ENCODE measurements at regions of chr16 and their contacts with region 1.

Region 1: DNA sequence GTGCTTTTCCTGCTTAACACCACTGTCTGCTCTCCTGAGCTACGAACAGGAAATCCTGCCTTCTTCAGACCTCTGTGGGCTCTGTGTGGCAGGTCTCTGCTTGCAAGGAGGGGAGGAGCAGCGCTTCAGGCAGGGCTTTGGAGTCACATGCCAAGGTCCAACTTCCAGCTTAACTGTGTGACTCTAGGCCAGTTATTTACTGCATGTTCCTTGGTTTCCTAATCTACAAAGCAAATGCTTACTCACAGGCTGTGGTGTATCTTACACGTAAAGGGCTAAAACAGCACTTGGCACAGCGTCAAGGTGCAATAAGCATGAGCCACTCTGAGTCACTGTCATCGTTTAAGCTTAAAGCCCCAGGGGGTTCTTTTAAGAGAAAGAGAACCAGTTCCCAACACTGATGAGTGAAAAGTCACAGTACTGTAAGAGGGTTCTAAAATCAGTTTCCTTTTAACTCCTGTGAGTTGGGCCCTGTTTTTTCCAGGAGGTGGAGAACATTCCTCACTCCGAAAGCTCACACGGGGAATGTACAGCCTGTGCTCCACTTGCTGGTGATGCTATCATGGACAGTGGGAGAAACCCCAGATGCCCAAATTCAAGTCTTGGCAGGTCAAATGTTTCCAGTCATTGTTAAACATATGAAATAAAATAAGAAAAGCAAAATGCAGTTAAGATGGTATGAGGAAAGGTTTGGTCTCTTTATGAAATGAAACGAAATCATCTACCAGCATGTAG is 54.1 kb upstream of the BCAR1 start:
- DNase-seq: peak in 4 of 5 donors; percentile 62 to 82 (median 68)
- ATAC-seq: peak; percentile 91 to 92 (median 92)
- H3K4me3 ChIP-seq: peak overlapping the region in 2 of 12 donors; percentile 2 to 7
- H3K27ac ChIP-seq: peak overlapping the region; percentile 75 to 94 (median 84)
- H3K4me1 ChIP-seq: peaks cover 3 to 34% (median 24%) of the 10 kb centered on the region in 12 donors
- H3K27me3 ChIP-seq: peaks cover 0 to 2% (median 0%) of the 10 kb centered on the region in 9 donors
- CTCF ChIP-seq: no peak
- POLR2A ChIP-seq: no peak

Region 2: DNA sequence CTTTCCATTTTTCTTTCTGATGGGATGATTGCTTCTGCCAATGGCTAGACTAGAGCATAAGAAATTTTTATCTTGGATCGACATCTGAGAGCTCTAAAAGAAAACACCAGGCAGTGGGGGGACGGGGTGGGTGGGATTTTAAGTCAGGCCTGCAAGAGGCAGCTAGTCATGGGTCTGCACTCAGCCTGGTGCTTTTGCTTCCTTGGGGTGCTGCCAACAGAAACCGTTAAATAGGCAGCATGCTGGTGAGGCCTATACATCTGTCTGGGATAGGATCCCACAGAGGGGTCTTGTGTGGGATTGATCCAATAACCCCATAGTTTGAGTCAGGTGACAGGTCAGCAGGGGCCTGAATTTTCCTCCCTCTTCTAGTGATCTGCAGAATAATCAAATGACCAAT is 279.8 kb before region 1 on chr16:
- intact Hi-C with region 1: no loop called
- DNase-seq: no peak
- ATAC-seq: peak in 3 of 4 donors; percentile 29 to 35 (median 32)
- H3K4me3 ChIP-seq: no peak overlapping the region
- H3K27ac ChIP-seq: peak overlapping the region in 10 of 12 donors; percentile 1 to 80 (median 56)
- H3K4me1 ChIP-seq: peaks cover 3 to 45% (median 22%) of the 10 kb centered on the region in 12 donors
- H3K27me3 ChIP-seq: no peaks in the 10 kb centered on the region
- CTCF ChIP-seq: no peak
- POLR2A ChIP-seq: no peak

Region 3: GRCh38 chr16:75234856-75235696 is 70.5 kb before region 1 on chr16:
- intact Hi-C with region 1: loop called in 2 of 10 experiments (anchors 5 kb)
- DNase-seq: peak in 2 of 5 donors; percentile 11 to 27
- ATAC-seq: no peak
- H3K4me3 ChIP-seq: no peak overlapping the region
- H3K27ac ChIP-seq: peak overlapping the region in 8 of 12 donors; percentile 17 to 63 (median 56)
- H3K4me1 ChIP-seq: peaks cover 3 to 61% (median 47%) of the 10 kb centered on the region in 12 donors
- H3K27me3 ChIP-seq: peaks cover 0 to 19% (median 0%) of the 10 kb centered on the region in 9 donors
- CTCF ChIP-seq: peak in 1 of 12 donors; percentile 2
- POLR2A ChIP-seq: no peak

Region 4: GRCh38 chr16:75251280-75252048 is 54.1 kb before region 1 on chr16 and contains the start of gene BCAR1:
- intact Hi-C with region 1: loop called in 4 of 10 experiments (anchors 2 to 10 kb)
- DNase-seq: peak; percentile 91 to 95 (median 93)
- ATAC-seq: peak; percentile 58 to 81 (median 74)
- H3K4me3 ChIP-seq: peak within 1 kb of the TSS; percentile 65 to 98 (median 88)
- H3K27ac ChIP-seq: peak within 1 kb of the TSS; percentile 86 to 99 (median 94)
- H3K4me1 ChIP-seq: peaks cover 38 to 98% (median 90%) of the 10 kb centered on the region in 12 donors
- H3K27me3 ChIP-seq: peaks cover 0 to 52% (median 0%) of the 10 kb centered on the region in 9 donors
- CTCF ChIP-seq: peak in 7 of 12 donors; percentile 9 to 57 (median 27)
- POLR2A ChIP-seq: peak in 1 of 2 donors; percentile 34
- total RNA-seq, gene BCAR1: 51.4 to 129 (median 72.0) TPM

Region 5: DNA sequence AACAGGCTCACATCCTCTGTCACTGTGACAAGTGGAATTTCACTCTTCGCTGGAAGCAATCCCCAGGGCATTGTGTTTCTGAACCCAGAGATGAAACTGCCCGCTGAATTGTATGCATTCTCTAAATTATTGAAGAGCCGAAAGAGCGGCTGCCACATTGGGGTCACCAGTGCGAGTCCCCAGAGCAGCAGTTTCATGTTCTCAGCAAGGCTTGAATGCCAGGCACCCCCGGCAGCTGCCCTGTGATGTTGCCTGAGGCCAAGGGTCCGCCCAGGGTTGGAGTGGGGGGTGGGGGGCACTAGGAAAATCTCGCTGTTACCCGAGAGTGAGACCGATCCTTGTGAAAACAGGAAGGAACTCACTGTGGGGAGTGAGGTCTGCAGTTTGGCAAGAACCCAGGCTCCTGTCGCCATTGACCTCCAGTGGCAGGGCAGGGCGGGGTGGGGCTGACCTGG is 33.4 kb before region 1 on chr16:
- intact Hi-C with region 1: loop called in 3 of 10 experiments (anchors 5 kb)
- DNase-seq: no peak
- ATAC-seq: no peak
- H3K4me3 ChIP-seq: no peak overlapping the region
- H3K27ac ChIP-seq: no peak overlapping the region
- H3K4me1 ChIP-seq: peaks cover 0 to 22% (median 9%) of the 10 kb centered on the region in 12 donors
- H3K27me3 ChIP-seq: peaks cover 0 to 28% (median 0%) of the 10 kb centered on the region in 9 donors
- CTCF ChIP-seq: no peak
- POLR2A ChIP-seq: no peak

Region 6: GRCh38 chr16:75379911-75380847 is 74.6 kb after region 1 on chr16:
- intact Hi-C with region 1: loop called in 3 of 10 experiments (anchors 2 to 10 kb)
- DNase-seq: no peak
- ATAC-seq: peak in 1 of 4 donors; percentile 45
- H3K4me3 ChIP-seq: no peak overlapping the region
- H3K27ac ChIP-seq: peak overlapping the region in 3 of 12 donors; percentile 14 to 35 (median 17)
- H3K4me1 ChIP-seq: peaks cover 0 to 49% (median 6%) of the 10 kb centered on the region in 12 donors
- H3K27me3 ChIP-seq: peaks cover 0 to 57% (median 0%) of the 10 kb centered on the region in 9 donors
- CTCF ChIP-seq: no peak
- POLR2A ChIP-seq: no peak

Measured in heart left ventricle (tissue), 16 donors.